ENCODE measurements at regions of chr1 and their contacts with region 1.

Region 1: DNA sequence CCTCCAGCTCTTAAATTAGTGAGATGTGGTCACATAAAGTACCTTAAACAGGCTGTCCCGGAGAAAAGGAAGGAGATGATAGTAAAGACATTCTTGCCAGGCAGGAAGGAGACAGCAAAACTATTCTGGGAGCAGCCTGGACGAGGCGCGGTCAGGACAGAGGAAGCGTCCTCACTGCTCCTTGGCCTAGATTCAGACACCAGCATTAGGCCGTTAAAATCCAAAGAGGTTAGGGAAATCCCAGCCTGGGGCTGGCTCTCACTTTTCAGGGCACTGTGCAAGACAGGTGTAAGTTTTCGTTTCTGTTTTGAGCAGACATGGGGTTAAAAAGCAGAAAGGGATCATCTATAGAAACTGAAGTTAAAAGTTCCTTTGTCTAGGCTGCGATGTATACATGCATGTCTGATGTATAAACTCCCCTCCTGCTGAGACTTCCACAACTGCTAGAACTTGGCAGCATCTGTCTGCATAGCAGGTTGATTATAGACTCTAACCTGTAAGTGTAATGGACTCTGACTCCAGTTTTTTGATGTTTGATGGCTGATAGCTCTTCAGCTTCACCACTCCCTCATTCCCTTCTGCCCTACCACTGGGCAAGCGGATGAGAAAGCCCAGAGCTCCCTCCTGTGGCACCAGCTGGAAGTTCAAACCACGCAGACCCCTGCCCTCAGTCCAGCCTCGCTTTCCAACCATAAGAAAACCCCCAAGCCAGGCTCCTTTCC is 21.5 kb downstream of the STPG1 start:
- DNase-seq: peak; percentile 86
- ATAC-seq: peak; percentile 83
- H3K4me3 Mint-ChIP-seq: peak overlapping the region; percentile 52
- H3K27ac Mint-ChIP-seq: peak overlapping the region; percentile 85
- H3K4me1 Mint-ChIP-seq: peaks cover 39% of the 10 kb centered on the region
- H3K27me3 Mint-ChIP-seq: no peaks in the 10 kb centered on the region

Region 2: GRCh38 chr1:24070821-24071393 is 321.1 kb before region 1 on chr1:
- CTCF ChIA-PET with region 1: interaction called, 19 read pairs
- POLR2A ChIA-PET with region 1: no interaction called
- intact Hi-C with region 1: loop called (anchors 1 to 2 kb)
- DNase-seq: peak; percentile 87
- ATAC-seq: peak; percentile 97
- H3K4me3 Mint-ChIP-seq: no peak overlapping the region
- H3K27ac Mint-ChIP-seq: no peak overlapping the region
- H3K4me1 Mint-ChIP-seq: peaks cover 4% of the 10 kb centered on the region
- H3K27me3 Mint-ChIP-seq: peaks cover 6% of the 10 kb centered on the region

Region 3: DNA sequence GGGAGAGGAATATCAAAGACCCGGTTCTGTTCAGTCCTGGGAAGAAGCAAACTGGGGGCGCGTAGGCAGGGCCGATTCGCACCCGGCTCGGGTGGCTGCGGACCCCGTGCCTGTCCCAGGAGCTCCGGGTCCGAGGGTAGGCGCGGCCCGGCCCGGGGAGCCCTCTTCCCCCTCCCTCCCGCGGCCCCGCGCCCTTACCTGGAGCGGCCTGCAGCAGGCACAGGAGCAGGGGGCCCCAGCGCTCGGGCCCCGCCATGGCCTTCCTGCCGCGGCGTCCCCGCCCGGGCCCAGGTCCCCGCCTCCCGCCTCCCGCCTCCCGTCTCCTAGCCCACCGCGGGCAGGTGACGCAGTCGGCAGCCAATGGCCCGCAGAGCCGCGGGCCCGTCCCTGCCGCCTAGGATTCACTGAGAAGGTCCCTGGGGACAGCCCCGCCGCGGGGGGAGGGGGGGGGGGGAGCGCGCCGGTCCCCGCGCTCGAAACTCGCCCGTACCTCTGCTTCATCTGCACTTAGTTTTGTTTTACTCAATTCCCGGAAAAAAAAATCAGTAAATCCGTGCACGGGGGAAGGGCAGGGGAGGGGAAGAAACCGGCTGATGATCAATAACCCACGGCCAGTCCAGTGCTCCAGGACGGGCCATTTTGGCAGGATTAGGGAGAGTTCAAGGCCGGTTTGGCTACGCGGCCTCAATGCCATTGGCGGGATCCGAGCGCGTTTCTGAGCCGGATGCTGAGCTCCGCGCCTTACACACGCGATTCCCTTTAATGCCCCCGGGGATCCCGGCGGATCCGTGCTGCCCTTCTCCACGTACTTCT is 204.8 kb before region 1 on chr1 and contains the start of gene IFNLR1:
- CTCF ChIA-PET with region 1: interaction called, 40 read pairs
- POLR2A ChIA-PET with region 1: no interaction called
- intact Hi-C with region 1: no loop called
- DNase-seq: peak; percentile 93
- ATAC-seq: peak; percentile 88
- H3K4me3 Mint-ChIP-seq: peak within 1 kb of the TSS; percentile 73
- H3K27ac Mint-ChIP-seq: peak within 1 kb of the TSS; percentile 71
- H3K4me1 Mint-ChIP-seq: peaks cover 47% of the 10 kb centered on the region
- H3K27me3 Mint-ChIP-seq: no peaks in the 10 kb centered on the region
- total RNA-seq, gene IFNLR1: 6.6 to 7.4 TPM

Region 4: GRCh38 chr1:24235921-24236781 is 155.9 kb before region 1 on chr1:
- CTCF ChIA-PET with region 1: interaction called, 10 read pairs
- POLR2A ChIA-PET with region 1: no interaction called
- intact Hi-C with region 1: no loop called
- DNase-seq: peak; percentile 82
- ATAC-seq: peak; percentile 100
- H3K4me3 Mint-ChIP-seq: no peak overlapping the region
- H3K27ac Mint-ChIP-seq: peak overlapping the region; percentile 27
- H3K4me1 Mint-ChIP-seq: peaks cover 15% of the 10 kb centered on the region
- H3K27me3 Mint-ChIP-seq: peaks cover 11% of the 10 kb centered on the region

Region 5: DNA sequence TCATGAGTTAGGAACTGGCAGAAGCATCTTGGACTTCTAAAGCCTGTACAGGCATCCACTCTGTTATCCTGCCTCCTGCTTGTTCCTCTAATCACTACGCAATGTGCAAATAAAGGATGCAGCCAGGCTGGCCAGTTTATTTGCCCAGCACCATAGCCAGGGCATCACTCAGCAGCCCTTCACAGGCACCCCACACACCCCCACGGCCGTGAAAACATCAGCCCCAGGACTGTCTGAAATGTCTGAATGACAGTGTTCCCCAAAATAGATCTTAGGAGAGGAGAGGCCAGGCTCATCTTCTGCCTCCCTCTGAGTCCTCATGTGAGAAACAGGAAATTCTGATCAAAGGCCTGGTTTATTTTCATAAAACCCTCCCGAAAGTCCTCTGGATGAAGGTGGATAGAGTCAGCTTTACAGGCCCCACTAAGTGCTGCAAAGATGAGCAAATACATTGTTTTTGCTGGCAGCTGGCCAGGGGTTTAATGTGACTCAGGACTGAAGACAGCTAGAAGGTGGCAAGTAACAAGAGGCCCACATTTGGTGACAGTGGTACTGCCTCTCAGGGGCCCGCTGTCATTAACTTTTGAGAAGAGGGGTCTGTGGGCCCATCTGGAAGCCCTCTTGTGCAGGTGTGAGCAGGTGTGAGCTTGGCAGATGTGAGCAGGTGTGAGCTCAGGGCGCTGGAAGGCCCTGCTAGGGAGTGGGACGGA is 40.0 kb before region 1 on chr1:
- CTCF ChIA-PET with region 1: interaction called, 14 read pairs
- POLR2A ChIA-PET with region 1: interaction called, 3 read pairs
- intact Hi-C with region 1: loop called in 1 of 2 experiments (anchors 2 kb)
- DNase-seq: peak; percentile 92
- ATAC-seq: peak; percentile 72
- H3K4me3 Mint-ChIP-seq: no peak overlapping the region
- H3K27ac Mint-ChIP-seq: peak overlapping the region; percentile 79
- H3K4me1 Mint-ChIP-seq: peaks cover 39% of the 10 kb centered on the region
- H3K27me3 Mint-ChIP-seq: no peaks in the 10 kb centered on the region

Region 6: DNA sequence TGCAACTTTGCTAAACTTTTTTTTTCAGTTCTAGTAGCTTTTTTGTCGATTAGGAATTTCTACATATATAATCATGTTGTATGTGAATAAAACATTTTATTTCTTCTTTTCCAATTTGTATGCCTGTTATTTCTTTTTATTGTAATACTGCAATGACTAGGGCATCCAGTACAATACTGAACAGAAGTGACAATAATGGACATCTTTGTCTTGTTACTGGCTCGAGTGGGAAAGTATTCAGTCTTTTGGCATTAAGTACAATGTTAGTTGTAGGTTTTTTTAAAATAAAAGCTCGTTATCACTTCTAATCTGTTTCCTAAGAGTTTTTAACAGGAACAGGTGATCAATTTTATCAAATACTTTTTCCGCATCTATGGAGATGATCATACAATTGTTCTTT is 11.8 kb after region 1 on chr1:
- CTCF ChIA-PET with region 1: interaction called, 49 read pairs
- POLR2A ChIA-PET with region 1: no interaction called
- intact Hi-C with region 1: no loop called
- DNase-seq: no peak
- ATAC-seq: no peak
- H3K4me3 Mint-ChIP-seq: no peak overlapping the region
- H3K27ac Mint-ChIP-seq: no peak overlapping the region
- H3K4me1 Mint-ChIP-seq: peaks cover 13% of the 10 kb centered on the region
- H3K27me3 Mint-ChIP-seq: no peaks in the 10 kb centered on the region

Region 7: DNA sequence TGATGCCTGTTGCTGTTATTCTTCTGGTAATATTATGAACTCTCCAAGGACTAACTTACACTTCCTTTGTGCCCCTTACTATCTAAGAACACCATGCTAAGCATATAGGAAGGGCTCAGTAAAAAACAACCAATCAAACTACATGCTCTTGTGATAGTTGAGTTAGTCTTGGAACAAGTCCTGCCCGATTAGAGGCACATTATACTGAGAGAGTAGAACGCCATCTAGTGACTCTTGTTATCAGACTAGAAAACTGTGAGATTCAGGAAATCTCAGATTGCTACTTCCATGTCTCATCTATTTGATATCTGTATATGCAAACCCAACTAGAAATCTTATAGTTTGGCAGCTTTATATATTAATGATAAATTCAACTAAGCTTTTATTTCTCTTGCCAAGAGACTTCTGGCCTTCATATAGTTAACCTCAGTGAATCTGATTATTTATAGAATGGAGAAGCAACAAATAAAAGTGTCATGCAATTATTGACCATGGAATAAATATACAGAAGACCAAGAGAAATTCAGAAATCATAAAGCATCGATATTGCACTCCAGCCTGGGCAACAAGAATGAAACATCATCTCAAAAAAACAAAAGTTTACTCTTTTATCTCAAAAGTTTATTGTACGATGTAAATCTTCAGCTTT is 243.3 kb after region 1 on chr1:
- CTCF ChIA-PET with region 1: interaction called, 20 read pairs
- POLR2A ChIA-PET with region 1: no interaction called
- intact Hi-C with region 1: loop called in 1 of 2 experiments (anchors 2 kb)
- DNase-seq: no peak
- ATAC-seq: peak; percentile 84
- H3K4me3 Mint-ChIP-seq: no peak overlapping the region
- H3K27ac Mint-ChIP-seq: no peak overlapping the region
- H3K4me1 Mint-ChIP-seq: peaks cover 12% of the 10 kb centered on the region
- H3K27me3 Mint-ChIP-seq: peaks cover 2% of the 10 kb centered on the region

Measured in activated CD4-positive, alpha-beta T cell treated with anti-CD3 and anti-CD28 coated beads for 36 hours (primary cell).